ENCODE measurements at regions of chr17 and their contacts with region 1.

Region 1: GRCh38 chr17:41579484-41580243 is 7.0 kb downstream of the KRT14 start:
- DNase-seq: peak; percentile 81
- H3K4me3 ChIP-seq: no peak overlapping the region
- H3K27ac ChIP-seq: no peak overlapping the region
- H3K4me1 ChIP-seq: no peaks in the 10 kb centered on the region
- H3K27me3 ChIP-seq: peaks cover 0 to 4% of the 10 kb centered on the region in 2 experiments
- CTCF ChIP-seq: peak; percentile 80 to 92
- POLR2A ChIP-seq: no peak

Region 2: DNA sequence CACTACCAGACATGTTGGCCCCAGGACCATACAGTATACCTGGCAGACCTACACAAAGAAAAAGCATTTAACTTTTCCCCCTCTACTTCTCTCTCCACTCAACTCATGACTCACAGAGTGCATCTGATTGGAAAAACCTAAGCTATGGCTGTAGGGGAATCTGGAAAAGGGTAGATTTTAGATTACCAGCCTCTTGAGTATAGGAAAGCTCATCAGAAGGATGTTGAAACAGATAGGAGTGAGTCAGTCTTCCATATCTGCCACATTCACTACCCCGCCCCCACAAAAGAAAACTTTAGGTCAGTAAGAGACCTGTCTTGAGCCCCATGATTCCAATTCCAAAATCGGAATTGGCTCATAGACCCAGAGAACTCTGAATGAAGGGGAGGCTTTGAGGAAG is 20.1 kb before region 1 on chr17:
- CTCF ChIA-PET with region 1: interaction called, 18 read pairs
- POLR2A ChIA-PET with region 1: no interaction called
- dilution Hi-C with region 1: no loop called
- intact Hi-C with region 1: no loop called
- DNase-seq: no peak
- H3K4me3 ChIP-seq: no peak overlapping the region
- H3K27ac ChIP-seq: no peak overlapping the region
- H3K4me1 ChIP-seq: peaks cover 10% of the 10 kb centered on the region
- H3K27me3 ChIP-seq: peaks cover 24 to 38% of the 10 kb centered on the region in 2 experiments
- CTCF ChIP-seq: no peak
- POLR2A ChIP-seq: no peak

Region 3: GRCh38 chr17:41885733-41886132 is 306.1 kb after region 1 on chr17:
- CTCF ChIA-PET with region 1: no interaction called
- POLR2A ChIA-PET with region 1: no interaction called
- dilution Hi-C with region 1: no loop called
- intact Hi-C with region 1: no loop called
- DNase-seq: no peak
- H3K4me3 ChIP-seq: no peak overlapping the region
- H3K27ac ChIP-seq: no peak overlapping the region
- H3K4me1 ChIP-seq: no peaks in the 10 kb centered on the region
- H3K27me3 ChIP-seq: no peaks in the 10 kb centered on the region
- CTCF ChIP-seq: peak in 1 of 2 donors; percentile 9
- POLR2A ChIP-seq: no peak

Measured in endothelial cell of umbilical vein (primary cell).